ENCODE measurements at regions of chr4 and their contacts with region 1.

Region 1: DNA sequence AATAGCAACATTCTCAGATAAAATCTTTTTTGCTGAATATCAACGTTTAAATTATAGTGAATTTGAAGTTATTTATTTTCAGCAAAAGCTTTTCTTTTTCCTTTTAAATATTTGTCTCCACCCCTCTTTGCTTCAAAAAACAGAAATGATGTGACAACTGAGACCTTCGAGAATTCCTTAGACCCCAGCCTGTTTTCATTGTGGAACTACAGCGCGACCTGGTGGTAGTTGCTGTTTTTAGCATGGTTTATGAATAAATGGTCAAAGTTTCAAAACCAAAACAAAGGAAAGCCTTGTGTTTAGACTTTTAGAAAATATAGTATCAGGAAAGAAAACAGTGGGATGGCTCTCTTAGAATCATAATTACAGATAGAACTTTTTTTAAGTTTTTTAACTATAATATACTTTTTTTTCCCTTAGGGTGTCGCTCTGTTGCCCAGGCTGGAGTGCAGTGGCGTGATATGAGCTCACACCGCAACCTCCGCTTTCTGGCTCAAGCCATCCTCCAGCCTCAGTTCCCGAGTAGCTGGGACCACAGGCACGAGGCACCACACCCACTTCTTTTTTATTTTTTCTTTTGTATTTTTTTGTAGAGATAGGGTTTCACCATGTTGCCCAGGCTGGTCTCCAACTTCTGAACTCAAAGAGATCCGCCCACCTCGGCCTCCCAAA is 26.8 kb upstream of the TMEM184C start:
- DNase-seq: peak; percentile 57
- H3K4me3 ChIP-seq: no peak overlapping the region
- H3K27ac ChIP-seq: no peak overlapping the region
- H3K4me1 ChIP-seq: no peaks in the 10 kb centered on the region
- H3K27me3 ChIP-seq: no peaks in the 10 kb centered on the region
- CTCF ChIP-seq: peak; percentile 55 to 66 (median 63)
- EP300 ChIP-seq: no peak
- POLR2A ChIP-seq: no peak

Region 2: GRCh38 chr4:147160908-147161513 is 429.4 kb before region 1 on chr4:
- intact Hi-C with region 1: loop called (anchors 10 kb)
- DNase-seq: no peak
- H3K4me3 ChIP-seq: no peak overlapping the region
- H3K27ac ChIP-seq: no peak overlapping the region
- H3K4me1 ChIP-seq: peaks cover 9 to 12% (median 11%) of the 10 kb centered on the region in 4 donors
- H3K27me3 ChIP-seq: peaks cover 0 to 9% (median 0%) of the 10 kb centered on the region in 4 donors
- CTCF ChIP-seq: peak; percentile 32 to 67 (median 49)
- EP300 ChIP-seq: no peak
- POLR2A ChIP-seq: no peak

Region 3: DNA sequence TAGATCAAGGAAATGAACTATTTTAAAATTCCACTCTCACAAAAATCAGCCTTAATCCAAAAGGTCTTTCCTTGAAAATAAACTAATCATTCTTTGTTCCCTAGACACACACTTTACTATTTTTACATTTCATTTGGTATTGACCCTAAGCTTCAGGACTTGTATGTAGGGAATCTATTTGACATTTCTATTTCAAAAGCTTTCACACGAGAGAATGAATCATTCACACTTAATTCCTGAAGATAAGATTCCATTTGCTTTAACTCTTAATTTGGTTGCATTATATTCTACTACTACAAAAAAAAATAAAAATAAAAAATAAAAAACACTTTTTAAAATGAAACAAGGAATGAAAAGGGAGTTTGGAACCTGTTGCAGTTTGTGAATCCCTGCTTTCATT is 65.8 kb before region 1 on chr4:
- intact Hi-C with region 1: loop called (anchors 5 kb)
- DNase-seq: no peak
- H3K4me3 ChIP-seq: no peak overlapping the region
- H3K27ac ChIP-seq: no peak overlapping the region
- H3K4me1 ChIP-seq: no peaks in the 10 kb centered on the region
- H3K27me3 ChIP-seq: no peaks in the 10 kb centered on the region
- CTCF ChIP-seq: no peak
- EP300 ChIP-seq: no peak
- POLR2A ChIP-seq: no peak

Region 4: GRCh38 chr4:147560637-147561036 is 29.7 kb before region 1 on chr4:
- intact Hi-C with region 1: no loop called
- DNase-seq: no peak
- H3K4me3 ChIP-seq: no peak overlapping the region
- H3K27ac ChIP-seq: no peak overlapping the region
- H3K4me1 ChIP-seq: no peaks in the 10 kb centered on the region
- H3K27me3 ChIP-seq: no peaks in the 10 kb centered on the region
- CTCF ChIP-seq: no peak
- EP300 ChIP-seq: no peak
- POLR2A ChIP-seq: no peak